ENCODE measurements at regions of chr17 and their contacts with region 1.

Region 1: GRCh38 chr17:35242805-35243560 is at the start of gene SLFN5:
- DNase-seq: peak; percentile 95
- ATAC-seq: peak; percentile 68
- H3K4me3 Mint-ChIP-seq: peak within 1 kb of the TSS; percentile 82
- H3K27ac Mint-ChIP-seq: peak within 1 kb of the TSS; percentile 94
- H3K4me1 Mint-ChIP-seq: peaks cover 72% of the 10 kb centered on the region
- H3K27me3 Mint-ChIP-seq: no peaks in the 10 kb centered on the region
- total RNA-seq, gene SLFN5: 28.8 to 29.8 TPM

Region 2: DNA sequence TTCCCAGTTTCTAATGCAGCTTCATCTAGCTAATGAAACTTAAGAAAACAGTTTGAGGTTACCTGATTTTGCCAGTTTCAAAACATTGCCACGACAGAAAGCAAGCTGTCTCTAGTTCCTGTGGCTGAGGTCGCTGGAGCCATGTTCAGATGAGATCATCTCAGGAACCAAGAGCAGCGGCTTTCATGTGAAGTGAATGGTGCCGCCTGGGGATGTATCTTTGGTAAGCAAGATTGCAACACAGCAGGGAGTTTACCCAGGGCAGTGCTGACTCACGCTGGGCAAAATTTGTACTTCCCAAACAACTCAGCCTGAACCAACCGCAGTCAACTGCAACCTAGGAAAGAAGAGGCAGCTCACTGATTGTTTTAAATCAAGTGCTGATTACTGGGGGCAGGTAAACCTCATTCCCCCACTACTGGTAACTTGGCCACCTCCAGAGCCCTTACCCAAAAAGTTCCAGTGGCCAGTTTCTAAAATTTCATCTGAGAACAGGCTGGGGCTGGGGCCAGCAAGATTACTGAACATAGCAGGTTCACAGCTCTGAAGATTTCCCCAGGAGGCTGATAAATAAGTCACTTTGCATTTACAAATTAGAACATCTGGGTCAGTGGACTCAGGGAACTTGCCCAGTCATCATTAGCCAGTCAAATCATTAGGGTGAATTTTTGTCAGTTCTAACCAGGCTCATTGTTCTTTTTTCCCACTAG is 179.3 kb before region 1 on chr17 and contains the start of gene RFFL:
- CTCF ChIA-PET with region 1: interaction called, 4 read pairs
- POLR2A ChIA-PET with region 1: no interaction called
- intact Hi-C with region 1: loop called in 1 of 2 experiments (anchors 1 kb)
- DNase-seq: peak; percentile 94
- ATAC-seq: peak; percentile 98
- H3K4me3 Mint-ChIP-seq: peak within 1 kb of the TSS; percentile 12
- H3K27ac Mint-ChIP-seq: peak within 1 kb of the TSS; percentile 80
- H3K4me1 Mint-ChIP-seq: peaks cover 62% of the 10 kb centered on the region
- H3K27me3 Mint-ChIP-seq: no peaks in the 10 kb centered on the region
- total RNA-seq, gene RFFL: 19.2 to 22.9 TPM

Region 3: GRCh38 chr17:35170968-35171771 is 71.8 kb before region 1 on chr17:
- CTCF ChIA-PET with region 1: no interaction called
- POLR2A ChIA-PET with region 1: no interaction called
- intact Hi-C with region 1: loop called (anchors 1 to 2 kb)
- DNase-seq: peak; percentile 32
- ATAC-seq: peak; percentile 76
- H3K4me3 Mint-ChIP-seq: no peak overlapping the region
- H3K27ac Mint-ChIP-seq: peak overlapping the region; percentile 47
- H3K4me1 Mint-ChIP-seq: peaks cover 39% of the 10 kb centered on the region
- H3K27me3 Mint-ChIP-seq: no peaks in the 10 kb centered on the region

Region 4: DNA sequence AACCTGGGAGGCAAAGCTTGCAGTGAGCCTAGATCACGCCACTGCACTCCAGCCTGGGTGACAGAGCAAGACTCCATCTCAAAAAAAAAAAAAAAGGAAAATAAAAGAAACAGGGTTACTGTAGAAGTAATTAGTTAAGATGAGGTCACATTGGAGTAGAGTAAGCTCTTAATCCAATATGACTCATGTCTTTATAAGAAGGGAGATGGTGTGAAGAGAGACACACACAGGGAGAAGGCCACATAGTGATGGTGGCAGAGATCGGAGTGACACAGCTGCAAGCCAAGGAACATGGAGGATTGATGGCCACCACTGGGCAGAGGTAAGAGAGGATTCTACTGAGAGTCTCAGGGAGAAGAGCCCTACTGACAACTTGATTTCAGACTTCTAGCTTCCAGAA is 15.4 kb before region 1 on chr17:
- CTCF ChIA-PET with region 1: interaction called, 11 read pairs
- POLR2A ChIA-PET with region 1: interaction called, 6 read pairs
- intact Hi-C with region 1: no loop called
- DNase-seq: no peak
- ATAC-seq: peak; percentile 72
- H3K4me3 Mint-ChIP-seq: no peak overlapping the region
- H3K27ac Mint-ChIP-seq: no peak overlapping the region
- H3K4me1 Mint-ChIP-seq: peaks cover 47% of the 10 kb centered on the region
- H3K27me3 Mint-ChIP-seq: no peaks in the 10 kb centered on the region

Region 5: GRCh38 chr17:35312790-35313711 is 70.1 kb after region 1 on chr17:
- CTCF ChIA-PET with region 1: interaction called, 7 read pairs
- POLR2A ChIA-PET with region 1: no interaction called
- intact Hi-C with region 1: loop called (anchors 2 to 5 kb)
- DNase-seq: peak; percentile 77
- ATAC-seq: peak; percentile 86
- H3K4me3 Mint-ChIP-seq: peak overlapping the region; percentile 73
- H3K27ac Mint-ChIP-seq: peak overlapping the region; percentile 86
- H3K4me1 Mint-ChIP-seq: peaks cover 28% of the 10 kb centered on the region
- H3K27me3 Mint-ChIP-seq: no peaks in the 10 kb centered on the region

Region 6: GRCh38 chr17:35345926-35346771 is 103.2 kb after region 1 on chr17:
- CTCF ChIA-PET with region 1: no interaction called
- POLR2A ChIA-PET with region 1: no interaction called
- intact Hi-C with region 1: no loop called
- DNase-seq: peak; percentile 40
- ATAC-seq: peak; percentile 70
- H3K4me3 Mint-ChIP-seq: peak overlapping the region; percentile 73
- H3K27ac Mint-ChIP-seq: peak overlapping the region; percentile 71
- H3K4me1 Mint-ChIP-seq: peaks cover 27% of the 10 kb centered on the region
- H3K27me3 Mint-ChIP-seq: peaks cover 2% of the 10 kb centered on the region

Region 7: DNA sequence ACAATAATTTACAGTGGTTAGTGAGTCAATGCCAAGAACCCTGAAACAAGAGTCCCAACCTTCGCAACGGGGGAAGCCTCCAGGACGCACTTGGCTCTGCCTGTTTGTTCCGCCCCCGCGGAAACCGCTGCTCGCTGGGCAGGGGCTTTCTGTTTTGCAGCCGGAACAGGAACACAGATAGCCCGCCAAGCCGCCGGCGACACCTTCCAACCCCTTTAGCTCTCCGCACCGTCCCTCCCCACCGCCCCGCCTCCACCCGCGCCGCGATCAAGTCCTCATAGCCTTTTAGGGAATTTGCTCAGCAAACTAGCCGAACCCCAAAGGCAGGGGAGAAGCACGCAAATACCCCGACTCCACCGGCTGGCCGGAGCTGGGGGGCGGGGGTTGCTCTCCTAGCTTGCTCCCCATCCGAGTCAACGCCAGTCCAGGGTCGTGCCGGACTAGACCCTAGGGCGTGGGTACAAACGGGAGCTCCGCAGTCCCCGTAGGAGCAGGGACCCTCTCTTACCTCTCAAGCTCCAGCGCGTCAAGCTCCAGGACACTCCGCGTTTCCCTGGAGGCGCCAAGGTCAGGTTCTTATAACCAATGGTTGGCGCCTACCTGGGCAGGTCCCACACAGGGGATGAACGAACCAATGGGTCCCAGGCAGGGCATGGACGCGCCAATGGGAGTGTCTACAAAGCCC is 205.4 kb after region 1 on chr17 and contains the start of gene SLFN13:
- CTCF ChIA-PET with region 1: no interaction called
- POLR2A ChIA-PET with region 1: no interaction called
- intact Hi-C with region 1: loop called in 1 of 2 experiments (anchors 1 kb)
- DNase-seq: peak; percentile 97
- ATAC-seq: peak; percentile 97
- H3K4me3 Mint-ChIP-seq: peak within 1 kb of the TSS; percentile 46
- H3K27ac Mint-ChIP-seq: peak within 1 kb of the TSS; percentile 51
- H3K4me1 Mint-ChIP-seq: peaks cover 15% of the 10 kb centered on the region
- H3K27me3 Mint-ChIP-seq: no peaks in the 10 kb centered on the region
- total RNA-seq, gene SLFN13: 18.6 to 22.5 TPM

Region 8: DNA sequence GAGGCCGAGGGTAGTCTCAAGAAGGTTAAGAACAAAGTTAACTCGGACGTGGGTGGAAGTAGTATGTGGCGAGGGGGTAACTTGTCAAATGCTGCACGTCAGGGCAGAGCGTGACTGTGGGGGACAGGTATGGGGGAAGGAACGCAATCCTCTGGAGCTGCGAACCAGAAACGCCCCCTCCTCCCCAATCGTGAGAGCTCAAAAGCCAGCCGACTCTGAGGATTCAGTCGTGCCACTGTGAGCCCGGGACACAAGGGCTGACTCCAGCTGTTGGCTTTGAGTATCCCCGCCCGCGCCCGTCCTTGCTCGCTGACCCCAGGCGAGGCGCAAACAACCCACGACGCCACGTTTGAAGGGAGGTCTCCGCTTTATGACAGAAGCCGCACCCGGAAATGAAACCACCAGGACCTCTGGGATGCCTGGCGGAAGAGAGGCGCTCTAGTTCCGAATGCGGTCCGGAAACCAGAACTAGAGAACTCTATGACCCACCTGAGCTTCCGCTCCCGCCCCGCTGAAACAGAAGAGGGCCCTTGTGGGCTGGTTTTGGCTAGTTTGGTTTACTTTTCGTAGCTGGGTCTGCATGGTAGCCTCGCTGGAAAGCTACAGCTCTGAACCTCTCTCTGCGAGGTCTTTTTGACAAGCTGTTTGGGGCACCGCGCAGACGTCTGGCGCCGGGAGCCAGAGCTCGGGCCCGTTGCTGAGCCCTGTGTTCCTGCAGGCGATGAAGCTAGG is 335.4 kb after region 1 on chr17 and contains the start of gene PEX12:
- CTCF ChIA-PET with region 1: interaction called, 3 read pairs
- POLR2A ChIA-PET with region 1: no interaction called
- intact Hi-C with region 1: loop called (anchors 1 to 5 kb)
- DNase-seq: peak; percentile 92
- ATAC-seq: peak; percentile 93
- H3K4me3 Mint-ChIP-seq: peak within 1 kb of the TSS; percentile 96
- H3K27ac Mint-ChIP-seq: peak within 1 kb of the TSS; percentile 98
- H3K4me1 Mint-ChIP-seq: peaks cover 23% of the 10 kb centered on the region
- H3K27me3 Mint-ChIP-seq: no peaks in the 10 kb centered on the region
- total RNA-seq, gene PEX12: 5.7 to 6.1 TPM

Region 9: GRCh38 chr17:35825206-35825605 is 582.2 kb after region 1 on chr17:
- CTCF ChIA-PET with region 1: no interaction called
- POLR2A ChIA-PET with region 1: no interaction called
- intact Hi-C with region 1: no loop called
- DNase-seq: no peak
- ATAC-seq: no peak
- H3K4me3 Mint-ChIP-seq: no peak overlapping the region
- H3K27ac Mint-ChIP-seq: no peak overlapping the region
- H3K4me1 Mint-ChIP-seq: peaks cover 8% of the 10 kb centered on the region
- H3K27me3 Mint-ChIP-seq: no peaks in the 10 kb centered on the region